MCF 10A (cell line): ENCODE measurements at regions of chr1 and their contacts with region 1.

Region 1: GRCh38 chr1:66725885-66726665 is 26.2 kb upstream of the DYNLT5 start:
- DNase-seq: peak; percentile 78
- H3K4me3 Mint-ChIP-seq: no peak overlapping the region
- H3K27ac Mint-ChIP-seq: no peak overlapping the region
- H3K4me1 Mint-ChIP-seq: peaks cover 16% of the 10 kb centered on the region
- H3K27me3 Mint-ChIP-seq: no peaks in the 10 kb centered on the region
- CTCF ChIP-seq: peak; percentile 88

Region 2: DNA sequence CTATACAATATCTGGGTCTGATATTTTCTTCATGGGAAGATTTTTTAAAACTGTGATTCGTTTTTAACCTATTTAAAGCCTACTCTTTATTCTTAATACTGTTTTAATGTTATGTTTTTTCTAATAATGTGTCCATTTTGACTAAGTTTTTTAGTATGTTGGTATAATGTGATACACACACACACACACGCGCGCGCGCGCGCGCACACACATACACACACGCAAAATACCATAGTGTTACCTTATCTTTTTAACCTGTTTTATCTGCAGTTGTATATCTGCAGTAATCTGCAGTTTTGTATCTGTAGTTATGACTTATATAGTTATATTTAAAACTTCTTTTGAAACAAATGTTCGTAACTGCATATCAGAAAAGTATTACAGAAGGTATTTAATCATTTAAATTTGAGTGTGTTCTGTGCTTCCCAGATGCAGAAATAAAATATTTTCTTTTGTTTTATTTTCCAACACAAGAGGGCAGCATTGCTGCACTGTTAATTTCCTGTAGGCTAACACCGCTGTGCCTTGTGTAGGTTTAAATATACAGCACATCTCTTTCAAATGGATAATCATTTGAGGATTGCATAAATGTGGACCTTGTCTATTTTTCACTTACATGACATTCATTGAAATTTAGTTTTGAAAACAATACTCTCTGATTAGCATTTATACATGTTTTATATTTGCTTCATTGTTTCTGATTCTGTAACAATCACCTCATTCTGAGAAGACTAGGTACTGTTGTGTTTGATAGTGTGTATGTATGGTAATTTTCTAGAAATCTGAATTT is 767.3 kb before region 1 on chr1:
- CTCF ChIA-PET with region 1: no interaction called
- POLR2A ChIA-PET with region 1: no interaction called
- intact Hi-C with region 1: loop called (anchors 1 kb)
- DNase-seq: peak; percentile 62
- H3K4me3 Mint-ChIP-seq: no peak overlapping the region
- H3K27ac Mint-ChIP-seq: no peak overlapping the region
- H3K4me1 Mint-ChIP-seq: no peaks in the 10 kb centered on the region
- H3K27me3 Mint-ChIP-seq: no peaks in the 10 kb centered on the region
- CTCF ChIP-seq: peak; percentile 60

Region 3: GRCh38 chr1:66388913-66389312 is 337.2 kb before region 1 on chr1:
- CTCF ChIA-PET with region 1: interaction called, 10 read pairs
- POLR2A ChIA-PET with region 1: no interaction called
- intact Hi-C with region 1: no loop called
- DNase-seq: no peak
- H3K4me3 Mint-ChIP-seq: no peak overlapping the region
- H3K27ac Mint-ChIP-seq: no peak overlapping the region
- H3K4me1 Mint-ChIP-seq: no peaks in the 10 kb centered on the region
- H3K27me3 Mint-ChIP-seq: no peaks in the 10 kb centered on the region
- CTCF ChIP-seq: no peak

Region 4: DNA sequence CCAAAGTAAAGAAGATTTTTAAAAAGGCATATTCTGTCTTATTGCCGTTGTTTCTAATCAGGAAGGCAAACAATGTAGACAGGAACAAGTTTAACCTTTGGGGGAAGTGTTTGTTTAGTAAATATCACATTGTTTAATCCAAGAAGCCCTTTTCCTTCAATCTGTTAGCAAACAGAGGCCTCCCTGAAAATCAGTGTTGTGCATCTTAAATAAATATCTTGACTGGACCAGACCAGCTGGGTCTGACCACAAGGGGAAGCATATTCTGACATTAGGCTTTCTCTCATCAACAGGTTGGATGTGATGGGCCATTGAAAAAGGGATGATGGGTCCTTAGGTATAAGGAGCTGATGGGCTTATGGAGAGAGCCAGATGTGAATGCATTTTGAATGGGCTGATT is 273.9 kb before region 1 on chr1:
- CTCF ChIA-PET with region 1: interaction called, 16 read pairs
- POLR2A ChIA-PET with region 1: no interaction called
- intact Hi-C with region 1: no loop called
- DNase-seq: no peak
- H3K4me3 Mint-ChIP-seq: no peak overlapping the region
- H3K27ac Mint-ChIP-seq: no peak overlapping the region
- H3K4me1 Mint-ChIP-seq: no peaks in the 10 kb centered on the region
- H3K27me3 Mint-ChIP-seq: no peaks in the 10 kb centered on the region
- CTCF ChIP-seq: no peak

Region 5: GRCh38 chr1:66521721-66522365 is 204.2 kb before region 1 on chr1:
- CTCF ChIA-PET with region 1: interaction called, 7 read pairs
- POLR2A ChIA-PET with region 1: no interaction called
- intact Hi-C with region 1: loop called (anchors 5 kb)
- DNase-seq: peak; percentile 88
- H3K4me3 Mint-ChIP-seq: no peak overlapping the region
- H3K27ac Mint-ChIP-seq: no peak overlapping the region
- H3K4me1 Mint-ChIP-seq: peaks cover 13% of the 10 kb centered on the region
- H3K27me3 Mint-ChIP-seq: no peaks in the 10 kb centered on the region
- CTCF ChIP-seq: no peak

Region 6: GRCh38 chr1:66711420-66711819 is 14.7 kb before region 1 on chr1:
- CTCF ChIA-PET with region 1: interaction called, 20 read pairs
- POLR2A ChIA-PET with region 1: no interaction called
- intact Hi-C with region 1: no loop called
- DNase-seq: peak; percentile 19
- H3K4me3 Mint-ChIP-seq: no peak overlapping the region
- H3K27ac Mint-ChIP-seq: no peak overlapping the region
- H3K4me1 Mint-ChIP-seq: no peaks in the 10 kb centered on the region
- H3K27me3 Mint-ChIP-seq: no peaks in the 10 kb centered on the region
- CTCF ChIP-seq: peak; percentile 28